MCF 10A (cell line): ENCODE measurements at regions of chr5 and their contacts with region 1.

Region 1: GRCh38 chr5:170100066-170100943 is 5.4 kb upstream of the FOXI1 start:
- DNase-seq: peak; percentile 87
- H3K4me3 Mint-ChIP-seq: no peak overlapping the region
- H3K27ac Mint-ChIP-seq: no peak overlapping the region
- H3K4me1 Mint-ChIP-seq: peaks cover 3% of the 10 kb centered on the region
- H3K27me3 Mint-ChIP-seq: no peaks in the 10 kb centered on the region
- CTCF ChIP-seq: peak; percentile 81

Region 2: DNA sequence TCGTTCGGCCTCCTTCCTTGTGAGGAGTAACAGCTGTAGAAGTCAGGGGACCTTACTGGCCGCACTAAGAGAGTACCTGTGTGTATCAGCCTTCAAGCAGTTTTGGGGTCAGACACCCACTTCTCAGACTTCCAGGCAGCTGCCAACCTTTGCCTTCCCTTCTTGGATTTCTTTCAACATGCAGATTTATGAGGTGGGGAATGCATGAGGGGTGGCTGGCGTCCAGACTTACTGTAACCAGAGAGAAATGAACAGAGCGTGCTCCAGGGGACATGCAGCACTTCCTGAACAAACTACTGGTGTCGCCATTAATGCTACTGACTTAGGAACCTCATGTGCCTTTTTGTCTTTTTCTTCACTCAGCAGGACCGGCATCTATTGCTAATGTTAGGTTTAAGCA is 166.7 kb before region 1 on chr5:
- CTCF ChIA-PET with region 1: no interaction called
- POLR2A ChIA-PET with region 1: no interaction called
- intact Hi-C with region 1: no loop called
- DNase-seq: no peak
- H3K4me3 Mint-ChIP-seq: no peak overlapping the region
- H3K27ac Mint-ChIP-seq: no peak overlapping the region
- H3K4me1 Mint-ChIP-seq: no peaks in the 10 kb centered on the region
- H3K27me3 Mint-ChIP-seq: no peaks in the 10 kb centered on the region
- CTCF ChIP-seq: no peak

Region 3: DNA sequence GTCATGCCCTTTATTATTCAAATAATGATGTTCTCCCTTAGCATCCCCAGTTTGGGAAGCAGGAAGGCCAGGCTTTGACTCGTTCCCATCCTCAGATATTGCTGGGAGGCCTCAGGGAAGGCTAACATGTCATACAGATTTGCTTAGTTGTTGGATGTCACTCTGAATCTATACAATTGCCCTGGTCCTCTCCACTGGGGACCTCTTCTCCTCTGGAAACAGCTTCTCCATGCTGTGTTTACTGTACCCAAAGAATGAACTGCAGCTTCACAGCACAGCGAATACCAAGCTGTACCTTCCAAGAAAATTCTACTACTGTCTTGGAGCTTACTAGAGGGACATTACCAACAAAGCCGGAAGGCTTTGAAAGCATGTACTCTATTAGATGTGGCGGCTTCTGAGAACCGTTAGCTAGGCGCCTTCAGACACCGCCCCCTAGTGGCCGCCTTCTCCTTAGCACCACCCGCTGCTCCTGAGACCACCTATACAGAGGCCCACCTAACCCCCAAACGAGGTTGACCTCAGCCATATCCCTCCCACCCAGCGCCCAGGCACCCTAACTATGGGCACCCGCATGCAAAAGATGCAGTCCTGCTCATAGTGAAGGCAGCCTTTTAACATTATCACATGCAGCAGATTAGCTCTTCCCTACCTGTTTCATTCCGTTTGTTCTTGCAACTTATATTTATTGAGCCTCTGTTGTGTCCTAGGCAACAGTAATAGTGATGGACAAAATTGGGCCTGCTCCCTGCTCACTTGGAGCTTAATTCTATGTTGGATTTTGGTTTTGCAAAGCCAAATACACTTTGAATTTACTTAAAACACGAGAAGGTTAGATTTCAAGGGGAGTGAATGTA is 29.5 kb before region 1 on chr5:
- CTCF ChIA-PET with region 1: interaction called, 10 read pairs
- POLR2A ChIA-PET with region 1: no interaction called
- intact Hi-C with region 1: no loop called
- DNase-seq: peak; percentile 60
- H3K4me3 Mint-ChIP-seq: no peak overlapping the region
- H3K27ac Mint-ChIP-seq: no peak overlapping the region
- H3K4me1 Mint-ChIP-seq: no peaks in the 10 kb centered on the region
- H3K27me3 Mint-ChIP-seq: peaks cover 31% of the 10 kb centered on the region
- CTCF ChIP-seq: peak; percentile 81

Region 4: GRCh38 chr5:170120576-170120975 is 20.3 kb after region 1 on chr5:
- CTCF ChIA-PET with region 1: interaction called, 53 read pairs
- POLR2A ChIA-PET with region 1: interaction called, 4 read pairs
- intact Hi-C with region 1: no loop called
- DNase-seq: peak; percentile 35
- H3K4me3 Mint-ChIP-seq: no peak overlapping the region
- H3K27ac Mint-ChIP-seq: no peak overlapping the region
- H3K4me1 Mint-ChIP-seq: no peaks in the 10 kb centered on the region
- H3K27me3 Mint-ChIP-seq: no peaks in the 10 kb centered on the region
- CTCF ChIP-seq: no peak

Region 5: GRCh38 chr5:170161069-170161468 is 60.8 kb after region 1 on chr5:
- CTCF ChIA-PET with region 1: interaction called, 19 read pairs
- POLR2A ChIA-PET with region 1: interaction called, 4 read pairs
- intact Hi-C with region 1: no loop called
- DNase-seq: no peak
- H3K4me3 Mint-ChIP-seq: no peak overlapping the region
- H3K27ac Mint-ChIP-seq: no peak overlapping the region
- H3K4me1 Mint-ChIP-seq: peaks cover 6% of the 10 kb centered on the region
- H3K27me3 Mint-ChIP-seq: no peaks in the 10 kb centered on the region
- CTCF ChIP-seq: no peak

Region 6: GRCh38 chr5:170206216-170206615 is 105.9 kb after region 1 on chr5:
- CTCF ChIA-PET with region 1: interaction called, 41 read pairs
- POLR2A ChIA-PET with region 1: interaction called, 3 read pairs
- intact Hi-C with region 1: no loop called
- DNase-seq: no peak
- H3K4me3 Mint-ChIP-seq: no peak overlapping the region
- H3K27ac Mint-ChIP-seq: no peak overlapping the region
- H3K4me1 Mint-ChIP-seq: no peaks in the 10 kb centered on the region
- H3K27me3 Mint-ChIP-seq: peaks cover 29% of the 10 kb centered on the region
- CTCF ChIP-seq: no peak

Region 7: GRCh38 chr5:170408226-170408625 is 307.9 kb after region 1 on chr5:
- CTCF ChIA-PET with region 1: interaction called, 10 read pairs
- POLR2A ChIA-PET with region 1: interaction called, 3 read pairs
- intact Hi-C with region 1: no loop called
- DNase-seq: no peak
- H3K4me3 Mint-ChIP-seq: no peak overlapping the region
- H3K27ac Mint-ChIP-seq: no peak overlapping the region
- H3K4me1 Mint-ChIP-seq: no peaks in the 10 kb centered on the region
- H3K27me3 Mint-ChIP-seq: peaks cover 20% of the 10 kb centered on the region
- CTCF ChIP-seq: no peak